Calu3 (cell line): ENCODE measurements at regions of chr9 and their contacts with region 1.

Region 1: DNA sequence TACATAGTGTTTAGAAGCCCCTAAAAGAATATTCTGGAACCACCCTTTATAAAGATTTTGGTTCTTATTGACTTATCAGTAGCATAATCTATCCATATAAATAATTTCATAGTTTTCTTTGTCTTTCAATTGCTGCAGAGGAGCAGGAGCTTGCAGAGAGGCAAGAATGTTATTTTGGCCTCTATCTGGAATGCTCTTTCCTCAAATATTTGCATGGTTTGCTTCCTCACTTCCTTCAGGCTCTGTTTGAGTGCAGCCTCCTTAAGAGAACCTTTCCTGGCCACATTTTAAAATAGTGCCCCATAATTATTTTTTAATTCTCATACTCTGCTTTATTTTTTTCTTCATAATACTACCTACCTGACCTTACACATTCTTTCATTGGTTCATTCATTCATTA is 1.5 kb downstream of the C5 start:
- DNase-seq: no peak
- H3K4me3 Mint-ChIP-seq: peak overlapping the region; percentile 16
- H3K27ac Mint-ChIP-seq: no peak overlapping the region
- H3K4me1 Mint-ChIP-seq: peaks cover 9% of the 10 kb centered on the region
- H3K27me3 Mint-ChIP-seq: no peaks in the 10 kb centered on the region
- CTCF ChIP-seq: no peak

Region 2: DNA sequence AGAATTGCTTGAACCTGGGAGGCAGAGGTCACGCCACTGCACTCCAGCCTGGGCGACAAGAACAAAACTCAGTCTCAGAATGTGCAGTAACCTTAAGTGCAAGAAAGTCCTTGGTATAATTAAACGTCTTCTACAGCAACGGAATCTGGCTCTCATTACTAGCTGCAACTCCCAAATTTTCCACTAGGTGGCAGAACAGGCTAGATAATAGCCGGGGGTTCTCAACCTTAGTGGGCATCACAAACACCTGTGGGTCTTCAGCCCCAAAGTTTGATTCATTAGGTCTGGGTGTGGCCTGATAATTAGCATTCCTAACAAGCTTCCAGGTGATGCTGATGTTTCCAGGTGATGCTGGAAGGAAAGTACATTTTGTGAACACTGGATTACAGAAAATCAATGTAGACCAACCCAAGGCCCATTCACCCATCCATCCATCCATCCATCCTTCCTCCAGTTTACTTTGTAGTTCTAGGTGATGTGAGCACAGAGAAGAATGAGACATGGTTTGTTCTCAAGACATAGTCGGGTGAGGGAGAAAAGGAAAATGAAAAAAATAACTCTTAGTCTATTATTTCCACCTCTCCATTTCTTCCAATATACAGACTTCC is 292.7 kb before region 1 on chr9:
- CTCF ChIA-PET with region 1: no interaction called
- intact Hi-C with region 1: no loop called
- DNase-seq: peak; percentile 58
- H3K4me3 Mint-ChIP-seq: no peak overlapping the region
- H3K27ac Mint-ChIP-seq: no peak overlapping the region
- H3K4me1 Mint-ChIP-seq: no peaks in the 10 kb centered on the region
- H3K27me3 Mint-ChIP-seq: no peaks in the 10 kb centered on the region
- CTCF ChIP-seq: peak; percentile 68

Region 3: DNA sequence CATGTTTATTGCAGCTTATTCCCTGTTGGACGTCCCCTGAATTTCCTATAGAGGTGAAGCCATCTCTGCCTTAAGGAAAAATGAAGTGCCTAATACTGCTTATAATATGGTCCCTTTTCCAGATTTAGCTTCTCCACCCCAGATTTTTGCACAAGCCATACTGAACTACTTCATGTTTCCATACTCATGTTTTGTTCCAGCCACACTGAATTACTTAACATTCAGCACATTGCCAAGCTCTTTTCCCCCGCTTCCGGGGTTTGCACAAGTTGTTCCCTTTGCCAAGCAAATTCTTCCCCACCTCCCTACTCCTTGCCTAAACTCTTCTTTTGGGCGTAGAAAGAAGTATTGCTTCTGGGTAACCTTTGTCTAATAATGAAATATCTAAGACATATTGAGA is 24.4 kb after region 1 on chr9:
- CTCF ChIA-PET with region 1: interaction called, 10 read pairs
- intact Hi-C with region 1: no loop called
- DNase-seq: no peak
- H3K4me3 Mint-ChIP-seq: peak overlapping the region; percentile 88
- H3K27ac Mint-ChIP-seq: no peak overlapping the region
- H3K4me1 Mint-ChIP-seq: peaks cover 24% of the 10 kb centered on the region
- H3K27me3 Mint-ChIP-seq: no peaks in the 10 kb centered on the region
- CTCF ChIP-seq: no peak